PC-9 (cell line): ENCODE measurements at regions of chr6 and their contacts with region 1.

Region 1: DNA sequence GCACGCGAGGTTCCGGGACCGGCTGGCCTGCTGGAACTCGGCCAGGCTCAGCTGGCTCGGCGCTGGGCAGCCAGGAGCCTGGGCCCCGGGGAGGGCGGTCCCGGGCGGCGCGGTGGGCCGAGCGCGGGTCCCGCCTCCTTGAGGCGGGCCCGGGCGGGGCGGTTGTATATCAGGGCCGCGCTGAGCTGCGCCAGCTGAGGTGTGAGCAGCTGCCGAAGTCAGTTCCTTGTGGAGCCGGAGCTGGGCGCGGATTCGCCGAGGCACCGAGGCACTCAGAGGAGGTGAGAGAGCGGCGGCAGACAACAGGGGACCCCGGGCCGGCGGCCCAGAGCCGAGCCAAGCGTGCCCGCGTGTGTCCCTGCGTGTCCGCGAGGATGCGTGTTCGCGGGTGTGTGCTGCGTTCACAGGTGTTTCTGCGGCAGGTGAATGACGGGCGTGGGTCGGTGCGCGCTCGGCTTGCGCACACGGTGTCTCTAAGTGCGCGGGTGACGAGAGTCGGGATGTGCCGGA is at the start of gene CDKN1A:
- DNase-seq: peak; percentile 79 to 93
- H3K4me3 ChIP-seq: peak within 1 kb of the TSS; percentile 66
- H3K27ac ChIP-seq: peak within 1 kb of the TSS; percentile 66
- H3K4me1 ChIP-seq: peaks cover 30% of the 10 kb centered on the region
- H3K27me3 ChIP-seq: no peaks in the 10 kb centered on the region
- CTCF ChIP-seq: no peak
- total RNA-seq, gene CDKN1A: 14.3 and 14.8 TPM in 2 replicates

Region 2: GRCh38 chr6:36423101-36423824 is 255.3 kb before region 1 on chr6:
- CTCF ChIA-PET with region 1: no interaction called
- POLR2A ChIA-PET with region 1: no interaction called
- intact Hi-C with region 1: loop called (anchors 2 kb)
- DNase-seq: peak; percentile 94 to 98
- H3K4me3 ChIP-seq: peak overlapping the region; percentile 75
- H3K27ac ChIP-seq: peak overlapping the region; percentile 81
- H3K4me1 ChIP-seq: peaks cover 45% of the 10 kb centered on the region
- H3K27me3 ChIP-seq: no peaks in the 10 kb centered on the region
- CTCF ChIP-seq: peak; percentile 65

Region 3: DNA sequence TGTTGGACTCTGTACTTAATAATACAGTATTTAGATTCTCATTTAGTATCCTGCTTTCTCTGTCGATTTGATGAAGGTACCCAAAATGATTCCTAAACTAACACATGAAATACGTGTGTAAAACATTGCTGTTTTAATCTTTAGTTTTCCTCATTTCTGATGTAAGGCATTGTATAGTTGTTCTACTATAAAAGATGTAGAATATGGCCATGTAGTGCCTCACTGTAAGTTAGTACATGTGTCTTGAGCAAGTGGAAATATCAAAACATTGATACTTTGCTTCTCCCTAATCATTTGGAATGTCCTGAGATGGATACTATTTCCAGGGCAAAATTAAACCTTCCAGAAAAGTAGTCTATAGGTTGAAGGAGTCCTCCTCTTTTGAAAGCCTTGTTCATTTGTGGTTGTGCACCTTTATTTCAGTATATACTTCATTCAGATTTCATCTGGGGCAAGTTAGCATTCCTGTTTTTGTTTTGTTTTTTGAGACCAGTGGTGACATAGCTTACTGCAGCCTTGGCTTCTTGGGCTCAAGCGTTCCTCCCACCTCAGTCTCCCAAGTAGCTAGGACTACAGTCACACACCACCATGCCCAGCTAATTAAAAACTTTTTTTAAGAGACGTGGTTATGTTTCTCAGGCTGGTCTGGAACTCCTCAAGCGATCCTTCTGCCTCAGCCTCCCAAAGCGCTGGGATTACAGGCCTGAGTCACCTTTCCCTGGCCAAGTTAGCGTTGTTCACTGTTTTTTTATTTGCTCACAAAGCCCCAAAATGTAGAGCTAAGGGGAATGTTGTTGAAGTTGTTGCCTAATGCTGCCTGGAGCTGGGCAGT is 72.8 kb before region 1 on chr6:
- CTCF ChIA-PET with region 1: interaction called, 11 read pairs
- POLR2A ChIA-PET with region 1: no interaction called
- intact Hi-C with region 1: no loop called
- DNase-seq: no peak
- H3K4me3 ChIP-seq: no peak overlapping the region
- H3K27ac ChIP-seq: no peak overlapping the region; the same call in 1 of the 2 replicates
- H3K4me1 ChIP-seq: 0 out of 2 replicates have a peak, but pooled peaks cover 13% of the 10 kb centered on the region
- H3K27me3 ChIP-seq: no peaks in the 10 kb centered on the region
- CTCF ChIP-seq: no peak

Region 4: GRCh38 chr6:36666726-36667591 is 11.6 kb before region 1 on chr6:
- CTCF ChIA-PET with region 1: no interaction called
- POLR2A ChIA-PET with region 1: interaction called, 16 read pairs
- intact Hi-C with region 1: loop called (anchors 1 kb)
- DNase-seq: peak; percentile 75 to 87
- H3K4me3 ChIP-seq: no peak overlapping the region
- H3K27ac ChIP-seq: peak overlapping the region; percentile 42; the same call in 1 of the 2 replicates
- H3K4me1 ChIP-seq: peaks cover 33% of the 10 kb centered on the region
- H3K27me3 ChIP-seq: no peaks in the 10 kb centered on the region
- CTCF ChIP-seq: no peak

Region 5: DNA sequence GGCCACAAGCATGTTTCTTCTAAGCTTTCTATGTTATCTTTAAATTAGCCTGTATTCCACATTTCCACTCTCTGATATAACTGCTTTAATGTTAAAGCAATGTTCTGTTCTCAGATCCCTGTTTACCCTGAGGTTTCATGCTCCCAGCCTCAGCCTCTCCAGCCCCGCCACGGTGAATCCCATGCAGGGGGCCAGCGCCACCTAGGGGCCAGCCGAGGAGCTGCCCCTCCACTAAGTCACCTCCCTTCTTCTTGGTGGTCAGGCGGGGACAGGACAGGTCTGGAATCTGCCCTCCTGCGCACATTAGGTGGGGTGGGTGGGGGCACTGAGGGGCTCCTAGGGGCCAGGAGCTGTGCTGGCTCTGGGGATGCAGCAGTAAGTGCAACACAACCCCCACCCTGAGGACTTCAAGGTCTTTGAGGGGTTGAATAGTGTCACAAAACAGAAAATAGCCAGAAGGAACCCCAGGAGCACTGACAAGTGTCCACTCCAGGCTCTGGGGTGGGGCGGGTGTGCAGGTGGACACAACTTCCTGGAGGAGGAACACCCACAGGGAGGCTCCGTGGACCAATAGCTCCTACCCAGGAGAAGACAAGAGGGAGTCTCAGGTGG is 80.7 kb after region 1 on chr6:
- CTCF ChIA-PET with region 1: interaction called, 3 read pairs
- POLR2A ChIA-PET with region 1: no interaction called
- intact Hi-C with region 1: loop called (anchors 1 kb)
- DNase-seq: peak; percentile 60 to 86
- H3K4me3 ChIP-seq: no peak overlapping the region
- H3K27ac ChIP-seq: no peak overlapping the region
- H3K4me1 ChIP-seq: peaks cover 21% of the 10 kb centered on the region
- H3K27me3 ChIP-seq: no peaks in the 10 kb centered on the region
- CTCF ChIP-seq: peak; percentile 96